ENCODE measurements at regions of chr11 and their contacts with region 1.

Region 1: GRCh38 chr11:57434640-57435546 is 8.0 kb upstream of the SLC43A3 start:
- DNase-seq: peak; percentile 86
- H3K4me3 ChIP-seq: no peak overlapping the region
- H3K27ac ChIP-seq: peak overlapping the region; percentile 41
- H3K27me3 ChIP-seq: no peaks in the 10 kb centered on the region
- CTCF ChIP-seq: no peak

Region 2: GRCh38 chr11:57406337-57406904 is 28.5 kb before region 1 on chr11:
- CTCF ChIA-PET with region 1: interaction called, 3 read pairs
- POLR2A ChIA-PET with region 1: interaction called, 13 read pairs
- DNase-seq: no peak
- H3K4me3 ChIP-seq: no peak overlapping the region
- H3K27ac ChIP-seq: no peak overlapping the region
- H3K27me3 ChIP-seq: peaks cover 2% of the 10 kb centered on the region
- CTCF ChIP-seq: no peak

Region 3: GRCh38 chr11:57424137-57424791 is 10.6 kb before region 1 on chr11:
- CTCF ChIA-PET with region 1: no interaction called
- POLR2A ChIA-PET with region 1: no interaction called
- DNase-seq: no peak
- H3K4me3 ChIP-seq: no peak overlapping the region; the same call in 1 of the 2 replicates
- H3K27ac ChIP-seq: peak overlapping the region; percentile 49
- H3K27me3 ChIP-seq: no peaks in the 10 kb centered on the region
- CTCF ChIP-seq: no peak

Region 4: DNA sequence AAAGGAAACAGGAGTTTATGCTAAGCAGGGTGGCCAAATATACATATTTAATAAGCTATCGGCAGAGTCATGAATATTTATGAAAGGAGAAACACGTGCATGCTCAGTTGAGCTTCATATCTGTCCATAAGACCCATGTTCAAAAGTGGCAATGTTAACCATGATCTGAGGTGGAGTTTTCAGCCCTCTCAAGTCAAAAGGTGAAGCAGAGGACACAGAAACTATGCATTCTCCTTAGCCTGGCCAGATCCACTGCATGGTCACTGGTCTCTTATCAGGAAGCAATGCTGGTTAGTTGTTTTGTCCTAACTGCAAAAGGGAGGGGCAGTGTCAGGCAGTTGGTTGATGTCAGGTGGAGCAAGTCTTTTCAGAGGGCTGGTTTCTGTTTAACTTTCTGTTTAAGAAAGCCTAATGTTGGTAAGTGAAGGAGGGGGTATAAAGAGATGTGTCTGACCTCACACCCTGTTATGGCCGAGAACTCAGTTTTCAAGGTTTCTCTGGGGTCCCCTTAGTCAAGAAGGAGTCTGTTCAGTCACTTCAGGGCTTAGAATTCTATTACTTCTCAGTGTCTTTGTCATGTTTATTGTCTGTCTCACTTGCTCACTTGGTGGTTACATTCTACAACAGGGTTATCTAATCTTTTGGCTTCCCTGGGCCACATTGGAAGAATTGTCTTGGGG is 300.9 kb after region 1 on chr11:
- CTCF ChIA-PET with region 1: no interaction called
- POLR2A ChIA-PET with region 1: no interaction called
- DNase-seq: no peak
- H3K4me3 ChIP-seq: no peak overlapping the region
- H3K27ac ChIP-seq: no peak overlapping the region
- H3K27me3 ChIP-seq: no peaks in the 10 kb centered on the region
- CTCF ChIP-seq: no peak

Measured in AG04450 (cell line).